ENCODE measurements at regions of chr10 and their contacts with region 1.

Region 1: DNA sequence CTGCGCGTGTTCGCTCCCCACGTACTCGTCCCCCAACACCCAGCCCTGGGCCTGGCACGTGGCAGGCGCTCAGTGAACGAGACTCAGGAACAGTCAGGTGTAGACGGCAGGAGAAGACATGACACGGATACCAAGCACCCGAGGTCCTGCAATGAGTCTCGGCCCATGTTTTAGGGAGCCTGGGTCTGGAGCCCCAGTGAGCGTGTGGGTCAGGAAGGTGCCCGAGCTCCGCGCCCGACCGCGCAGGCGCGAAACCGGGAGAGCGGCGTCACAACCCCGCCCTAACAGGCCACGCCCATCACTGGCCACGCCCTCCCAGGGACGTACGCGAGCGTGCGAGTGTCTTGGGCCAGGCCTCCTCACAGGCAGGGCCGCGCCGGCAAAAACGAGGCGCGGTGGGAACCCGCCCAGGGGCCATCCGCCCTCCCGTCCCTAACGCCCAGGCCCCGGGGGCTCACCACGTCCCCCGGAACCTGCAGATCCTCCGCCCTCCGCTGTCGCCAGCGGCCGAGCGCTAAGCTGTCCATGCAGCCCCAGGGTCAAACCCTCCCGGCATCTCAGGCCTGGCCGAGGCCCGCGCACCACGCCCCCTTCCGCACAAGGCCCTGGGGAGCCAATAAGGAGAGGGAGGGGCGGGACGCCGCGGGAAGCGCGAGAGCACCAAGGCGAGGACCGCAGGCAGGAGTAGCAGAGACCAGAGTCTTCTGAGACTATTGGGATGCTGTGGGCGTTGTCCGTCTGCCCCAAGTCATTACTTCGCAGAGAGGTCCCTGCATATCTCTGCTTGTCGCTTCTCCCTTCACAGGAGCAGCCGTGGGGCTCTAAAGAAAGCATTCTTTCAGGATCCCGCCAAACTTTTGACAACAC is at the start of gene C10orf143:
- DNase-seq: peak; percentile 97
- H3K4me3 Mint-ChIP-seq: peak within 1 kb of the TSS; percentile 95
- H3K27ac Mint-ChIP-seq: peak within 1 kb of the TSS; percentile 96
- H3K4me1 Mint-ChIP-seq: peaks cover 52% of the 10 kb centered on the region
- H3K27me3 Mint-ChIP-seq: no peaks in the 10 kb centered on the region
- total RNA-seq, gene C10orf143: 2.5 TPM

Region 2: DNA sequence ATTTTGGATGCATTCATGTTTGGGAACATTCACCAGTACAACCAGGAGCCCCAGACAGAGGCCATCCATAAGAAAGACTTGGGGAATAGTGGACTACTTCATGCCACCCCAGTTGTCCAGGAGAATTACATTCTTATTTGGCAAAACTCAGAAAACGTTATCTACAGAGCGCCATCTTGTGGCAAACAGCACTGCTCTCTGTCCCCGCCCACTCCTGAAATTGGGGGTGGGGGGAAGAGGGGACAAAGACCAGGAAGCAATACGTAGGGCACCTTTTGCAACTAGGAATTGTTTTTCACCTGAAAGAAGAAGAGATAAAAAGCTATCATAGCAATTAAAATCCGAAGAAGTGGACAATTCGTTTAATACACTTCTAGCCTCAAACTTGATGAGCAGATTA is 778.0 kb before region 1 on chr10:
- CTCF ChIA-PET with region 1: no interaction called
- POLR2A ChIA-PET with region 1: no interaction called
- DNase-seq: no peak
- H3K4me3 Mint-ChIP-seq: no peak overlapping the region
- H3K27ac Mint-ChIP-seq: no peak overlapping the region
- H3K4me1 Mint-ChIP-seq: no peaks in the 10 kb centered on the region
- H3K27me3 Mint-ChIP-seq: no peaks in the 10 kb centered on the region

Region 3: GRCh38 chr10:129466703-129467358 is 643.6 kb before region 1 on chr10 and contains the start of gene MGMT:
- CTCF ChIA-PET with region 1: no interaction called
- POLR2A ChIA-PET with region 1: interaction called, 26 read pairs
- DNase-seq: peak; percentile 98
- H3K4me3 Mint-ChIP-seq: peak within 1 kb of the TSS; percentile 75
- H3K27ac Mint-ChIP-seq: peak within 1 kb of the TSS; percentile 65
- H3K4me1 Mint-ChIP-seq: peaks cover 11% of the 10 kb centered on the region
- H3K27me3 Mint-ChIP-seq: no peaks in the 10 kb centered on the region
- total RNA-seq, gene MGMT: 15.4 to 16.7 TPM

Region 4: GRCh38 chr10:130136226-130137089 is 26.0 kb after region 1 on chr10 and contains the start of gene GLRX3:
- CTCF ChIA-PET with region 1: interaction called, 27 read pairs
- POLR2A ChIA-PET with region 1: interaction called, 198 read pairs
- DNase-seq: peak; percentile 88
- H3K4me3 Mint-ChIP-seq: peak within 1 kb of the TSS; percentile 91
- H3K27ac Mint-ChIP-seq: peak within 1 kb of the TSS; percentile 79
- H3K4me1 Mint-ChIP-seq: peaks cover 49% of the 10 kb centered on the region
- H3K27me3 Mint-ChIP-seq: peaks cover 4% of the 10 kb centered on the region
- total RNA-seq, gene GLRX3: 73.8 to 83.7 TPM

Region 5: DNA sequence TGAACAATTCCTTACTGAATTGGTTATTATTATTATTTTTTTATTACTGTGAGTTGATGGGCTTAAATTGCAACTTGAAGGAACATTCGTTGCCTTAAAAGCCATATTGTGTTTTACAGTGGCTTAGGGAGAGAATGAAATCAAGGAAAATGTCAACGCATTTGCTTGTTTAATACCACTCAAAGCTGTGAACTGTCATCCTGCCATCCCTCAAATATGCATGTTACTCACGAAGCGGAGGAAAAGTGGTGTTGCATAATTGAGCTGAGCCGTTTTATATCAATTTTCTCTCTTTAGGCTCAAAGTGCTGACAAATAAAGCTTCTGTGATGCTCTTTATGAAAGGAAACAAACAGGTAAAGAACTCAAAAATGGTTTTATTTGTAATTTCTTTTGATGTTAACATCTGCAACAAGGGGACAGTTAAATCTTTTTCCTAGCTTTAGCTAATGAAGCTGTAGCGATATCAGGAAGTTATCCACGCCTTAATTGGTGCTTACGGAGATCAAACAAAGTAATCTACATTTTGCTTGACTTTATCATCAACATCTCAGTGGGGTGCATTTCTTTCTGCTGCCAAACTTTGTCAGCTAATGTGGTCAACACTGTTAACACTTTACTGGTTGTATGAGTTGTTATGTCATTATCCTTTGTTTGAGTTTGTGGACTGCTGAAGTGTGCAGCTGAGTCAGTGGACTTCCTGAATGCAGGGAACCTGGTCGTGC is 58.8 kb after region 1 on chr10:
- CTCF ChIA-PET with region 1: interaction called, 4 read pairs
- POLR2A ChIA-PET with region 1: interaction called, 11 read pairs
- DNase-seq: no peak
- H3K4me3 Mint-ChIP-seq: no peak overlapping the region
- H3K27ac Mint-ChIP-seq: peak overlapping the region; percentile 40
- H3K4me1 Mint-ChIP-seq: peaks cover 49% of the 10 kb centered on the region
- H3K27me3 Mint-ChIP-seq: no peaks in the 10 kb centered on the region

Region 6: DNA sequence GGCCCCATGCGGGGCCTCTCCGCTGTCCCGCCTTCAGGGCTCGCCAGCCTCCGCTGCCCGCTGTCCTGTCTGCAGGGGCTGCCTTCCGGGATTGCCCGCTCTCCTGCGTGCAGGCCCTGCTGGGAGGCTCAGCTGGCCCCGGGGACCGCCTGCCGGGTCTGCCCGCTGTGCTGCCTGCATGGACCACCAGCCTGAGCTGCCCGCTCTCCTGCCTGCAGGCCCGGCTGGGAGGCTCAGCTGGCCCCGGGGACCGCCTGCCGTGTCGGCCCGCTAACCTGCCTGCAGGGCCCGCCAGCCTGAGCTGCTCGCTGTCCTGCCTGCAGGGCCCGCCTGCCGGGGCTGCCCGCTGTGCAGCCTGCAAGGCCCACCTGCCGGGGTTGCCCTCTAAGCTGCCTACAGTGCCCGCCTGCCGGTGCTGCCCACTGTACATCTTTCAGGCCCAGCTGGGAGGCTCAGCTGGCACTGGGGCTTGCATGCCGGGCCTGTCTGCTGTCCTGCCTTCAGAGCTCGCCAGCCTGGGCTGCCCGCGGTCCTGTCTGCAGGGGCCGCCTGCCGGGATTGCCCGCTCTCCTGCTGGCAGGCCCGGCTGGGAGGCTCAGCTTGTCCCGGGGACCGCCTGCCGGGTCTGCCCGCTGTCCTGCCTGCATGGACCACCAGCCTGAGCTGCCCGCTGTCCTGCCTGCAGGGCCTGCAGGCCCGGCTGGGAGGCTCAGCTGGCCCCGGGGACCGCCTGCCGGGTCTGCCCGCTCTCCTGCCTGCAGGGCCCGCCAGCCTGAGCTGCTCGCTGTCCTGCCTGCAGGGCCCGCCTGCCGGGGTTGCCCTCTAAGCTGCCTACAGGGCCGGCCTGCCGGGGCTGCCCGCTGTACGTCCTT is 190.8 kb after region 1 on chr10:
- CTCF ChIA-PET with region 1: interaction called, 3 read pairs
- POLR2A ChIA-PET with region 1: interaction called, 19 read pairs
- DNase-seq: peak; percentile 63
- H3K4me3 Mint-ChIP-seq: peak overlapping the region; percentile 64
- H3K27ac Mint-ChIP-seq: peak overlapping the region; percentile 69
- H3K4me1 Mint-ChIP-seq: peaks cover 8% of the 10 kb centered on the region
- H3K27me3 Mint-ChIP-seq: no peaks in the 10 kb centered on the region